ENCODE measurements at regions of chr16 and their contacts with region 1.

Region 1: DNA sequence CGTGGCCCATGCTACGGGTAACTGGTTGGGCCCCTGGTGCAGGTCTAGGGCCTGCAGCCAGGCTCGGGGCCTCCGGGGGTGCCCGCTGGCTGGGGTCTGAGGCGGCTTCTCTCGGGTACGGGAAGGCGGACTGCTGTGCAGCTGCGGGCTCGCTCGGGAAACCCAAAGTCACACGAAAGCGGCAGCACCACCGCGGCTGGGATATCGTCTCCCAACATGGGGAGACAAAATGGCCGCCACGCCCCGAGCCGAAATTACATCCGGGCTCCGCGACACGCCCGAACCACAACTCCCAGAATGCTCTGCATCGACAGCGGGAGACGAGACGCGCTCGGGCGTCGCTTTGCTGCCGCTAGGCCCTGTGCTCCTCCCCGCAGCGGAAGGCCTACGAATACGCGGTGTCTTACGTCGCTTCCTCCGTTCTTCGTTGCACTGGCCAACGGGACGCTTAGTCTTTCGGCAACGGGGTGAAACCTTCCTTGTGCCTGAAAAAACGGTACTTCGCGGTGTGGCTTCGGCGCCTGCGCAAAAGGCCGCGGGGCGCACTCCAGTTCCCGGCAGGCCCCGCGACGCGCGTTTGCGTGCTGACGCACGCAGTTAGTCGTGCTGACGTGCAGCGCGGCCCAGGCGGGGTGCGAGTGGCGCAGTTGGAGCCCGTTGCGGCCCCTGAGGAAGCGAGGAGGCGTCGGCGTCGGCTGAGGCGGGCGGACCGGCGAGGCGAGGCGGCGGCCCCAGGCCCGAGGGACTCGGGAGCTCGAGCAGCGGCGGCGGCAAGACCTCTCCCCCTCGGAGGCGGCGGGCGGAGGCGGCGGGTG is at the start of gene SRRM2:
- DNase-seq: peak; percentile 93 to 95
- H3K4me3 ChIP-seq: peak within 1 kb of the TSS; percentile 82 to 94 (median 83)
- H3K27ac ChIP-seq: peak within 1 kb of the TSS; percentile 99 to 100
- H3K4me1 ChIP-seq: peaks cover 6 to 22% of the 10 kb centered on the region in 2 donors
- H3K27me3 ChIP-seq: no peaks in the 10 kb centered on the region
- CTCF ChIP-seq: peak; percentile 11 to 20 (median 18)
- POLR2A ChIP-seq: peak; percentile 90
- total RNA-seq, gene SRRM2: 229 to 416 (median 388) TPM

Region 2: GRCh38 chr16:2854700-2855309 is 102.6 kb after region 1 on chr16:
- intact Hi-C with region 1: loop called (anchors 10 kb)
- DNase-seq: no peak
- H3K4me3 ChIP-seq: no peak overlapping the region
- H3K27ac ChIP-seq: no peak overlapping the region
- H3K4me1 ChIP-seq: no peaks in the 10 kb centered on the region
- H3K27me3 ChIP-seq: peaks cover 0 to 9% of the 10 kb centered on the region in 2 donors
- CTCF ChIP-seq: peak; percentile 20 to 30 (median 29)
- POLR2A ChIP-seq: no peak